ENCODE measurements at regions of chr3 and their contacts with region 1.

Region 1: GRCh38 chr3:142987080-142987700 is 14.2 kb upstream of the U2SURP start:
- DNase-seq: no peak
- H3K4me3 ChIP-seq: no peak overlapping the region
- H3K27ac ChIP-seq: no peak overlapping the region
- H3K4me1 ChIP-seq: no peaks in the 10 kb centered on the region
- H3K27me3 ChIP-seq: no peaks in the 10 kb centered on the region
- CTCF ChIP-seq: peak; percentile 40 to 69 (median 62)
- POLR2A ChIP-seq: no peak

Region 2: DNA sequence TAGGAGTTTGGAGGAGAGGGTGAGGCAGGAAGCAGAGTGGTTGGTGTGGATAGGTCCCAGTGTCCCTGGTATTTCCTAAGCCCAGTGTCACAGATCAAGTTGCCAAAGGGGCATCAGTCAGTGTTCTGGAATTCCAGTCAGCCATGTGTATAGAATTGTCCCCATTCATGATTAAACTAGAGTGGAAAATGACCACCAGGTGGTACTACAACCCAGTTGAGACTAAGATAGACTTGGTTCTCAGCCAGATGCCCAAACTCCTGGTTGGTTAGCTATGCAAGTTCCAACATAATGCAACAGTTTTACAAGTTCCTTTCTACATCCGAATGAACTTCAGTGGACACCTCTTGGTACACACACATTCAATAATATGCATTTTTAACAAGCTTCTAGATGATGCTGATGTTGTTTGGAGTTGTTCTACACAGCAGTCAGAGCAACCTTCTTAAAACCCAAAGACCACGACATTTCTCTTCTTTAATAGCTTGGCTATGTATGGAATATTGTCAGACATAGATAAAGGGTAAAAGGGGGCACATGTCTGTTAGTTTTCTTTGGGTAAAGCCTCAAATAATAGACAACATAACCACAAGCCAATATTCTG is 400.3 kb before region 1 on chr3:
- intact Hi-C with region 1: loop called (anchors 10 kb)
- DNase-seq: peak; percentile 75
- H3K4me3 ChIP-seq: no peak overlapping the region
- H3K27ac ChIP-seq: no peak overlapping the region
- H3K4me1 ChIP-seq: no peaks in the 10 kb centered on the region
- H3K27me3 ChIP-seq: no peaks in the 10 kb centered on the region
- CTCF ChIP-seq: peak in 3 of 4 experiments; percentile 62 to 75 (median 73)
- POLR2A ChIP-seq: no peak

Region 3: DNA sequence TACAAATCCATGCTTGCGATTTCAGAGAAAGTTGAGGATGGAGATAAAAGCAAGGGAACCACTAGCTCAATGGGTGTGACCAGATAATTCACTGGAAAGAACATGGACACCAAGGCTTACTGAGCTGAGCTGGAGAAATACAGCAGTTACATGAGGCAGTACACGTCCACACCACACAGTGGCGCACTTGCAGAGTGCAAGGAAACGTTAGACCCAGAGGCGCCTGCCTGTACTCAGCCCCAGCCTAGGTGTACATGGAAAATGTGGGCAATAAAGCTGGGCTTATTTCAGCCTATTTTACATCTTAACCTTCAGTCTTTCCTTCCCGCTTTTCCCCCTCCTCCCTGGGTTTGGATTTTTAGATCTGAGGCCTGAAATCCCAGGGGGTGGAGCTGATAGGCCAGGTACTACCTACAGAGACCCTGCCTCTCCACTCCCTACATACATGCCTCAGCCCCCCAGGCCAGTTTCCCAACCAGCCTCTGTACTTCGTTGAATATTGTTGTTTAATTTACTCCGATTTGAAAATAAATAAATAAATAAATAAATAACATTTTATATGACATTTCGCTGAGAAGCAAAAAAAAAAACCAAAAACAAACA is 158.4 kb before region 1 on chr3:
- intact Hi-C with region 1: loop called (anchors 2 kb)
- DNase-seq: peak; percentile 59
- H3K4me3 ChIP-seq: no peak overlapping the region
- H3K27ac ChIP-seq: no peak overlapping the region
- H3K4me1 ChIP-seq: no peaks in the 10 kb centered on the region
- H3K27me3 ChIP-seq: no peaks in the 10 kb centered on the region
- CTCF ChIP-seq: peak; percentile 46 to 81 (median 70)
- POLR2A ChIP-seq: no peak

Region 4: GRCh38 chr3:142912402-142913172 is 74.6 kb before region 1 on chr3:
- intact Hi-C with region 1: loop called (anchors 5 kb)
- DNase-seq: no peak
- H3K4me3 ChIP-seq: no peak overlapping the region
- H3K27ac ChIP-seq: no peak overlapping the region
- H3K4me1 ChIP-seq: no peaks in the 10 kb centered on the region
- H3K27me3 ChIP-seq: no peaks in the 10 kb centered on the region
- CTCF ChIP-seq: no peak
- POLR2A ChIP-seq: no peak